H1 (cell line): ENCODE measurements at regions of chr1 and their contacts with region 1.

Region 1: DNA sequence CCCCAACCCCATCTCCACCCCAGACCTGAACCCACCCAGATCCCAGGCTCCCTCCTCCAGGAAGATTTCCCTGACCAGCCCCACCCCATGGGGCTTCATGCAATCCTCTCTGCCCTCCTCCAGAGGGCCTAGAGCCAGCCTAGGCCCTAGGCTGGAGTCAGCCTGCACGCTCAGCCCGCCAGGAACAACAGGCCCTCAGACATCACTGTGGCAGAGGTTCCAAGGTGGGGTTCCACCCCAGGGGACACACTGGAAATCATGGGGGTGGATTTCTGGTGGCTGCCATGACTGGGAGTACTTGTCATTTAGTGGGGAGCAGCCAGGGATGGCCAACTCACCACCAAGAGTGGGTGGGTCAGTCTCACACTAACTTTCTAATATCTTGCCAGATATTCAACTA is 122.0 kb downstream of the GLIS1 start:
- DNase-seq: no peak
- H3K4me3 ChIP-seq: no peak overlapping the region
- H3K27ac ChIP-seq: no peak overlapping the region
- H3K4me1 ChIP-seq: peaks cover 2 to 3% (median 3%) of the 10 kb centered on the region in 4 experiments; a peak in 5 of 7 replicates
- H3K27me3 ChIP-seq: no peaks in the 10 kb centered on the region
- CTCF ChIP-seq: peak; percentile 49 to 63 (median 60)
- EP300 ChIP-seq: no peak
- POLR2A ChIP-seq: no peak
- RAD21 ChIP-seq: peak; percentile 38 to 69

Region 2: DNA sequence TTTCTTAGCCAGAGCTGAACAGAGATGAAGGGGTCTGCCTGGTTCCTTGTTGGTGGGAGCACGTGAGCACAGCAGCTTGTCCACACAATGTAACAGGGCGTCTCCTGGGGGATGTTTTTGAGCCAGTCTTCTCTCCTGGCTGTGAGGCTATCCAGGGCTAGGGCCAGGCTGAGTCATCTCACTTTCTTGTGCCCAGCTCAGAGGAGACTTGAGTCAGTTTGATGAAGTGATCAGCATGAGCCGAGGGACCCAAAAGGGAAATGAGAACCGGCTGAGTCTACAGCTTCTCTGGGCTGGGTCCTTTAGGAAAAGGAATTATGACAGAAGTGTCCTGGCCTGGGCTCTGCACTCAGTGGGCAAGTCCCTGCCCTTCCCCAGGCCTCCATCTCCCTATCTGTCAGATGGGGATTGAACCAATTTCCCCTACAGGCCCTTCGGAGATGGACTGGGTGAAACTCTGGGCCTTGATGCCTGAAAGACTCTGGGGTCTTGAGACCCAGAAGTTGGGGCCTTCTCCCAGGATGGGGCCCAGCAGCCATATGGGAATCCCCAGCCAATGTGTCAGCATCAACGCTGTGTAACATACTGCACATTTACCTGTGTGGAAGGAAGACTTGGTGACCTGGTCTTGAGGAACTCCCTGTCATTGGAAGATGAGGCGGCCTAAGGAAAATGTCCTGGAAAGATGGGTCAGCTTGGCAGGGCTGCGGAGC is 121.1 kb before region 1 on chr1:
- CTCF ChIA-PET with region 1: no interaction called
- POLR2A ChIA-PET with region 1: no interaction called
- DNase-seq: no peak
- H3K4me3 ChIP-seq: no peak overlapping the region
- H3K27ac ChIP-seq: no peak overlapping the region
- H3K4me1 ChIP-seq: no peaks in the 10 kb centered on the region; a peak in 1 of 7 replicates
- H3K27me3 ChIP-seq: no peaks in the 10 kb centered on the region; a peak in 1 of 7 replicates
- CTCF ChIP-seq: no peak
- EP300 ChIP-seq: no peak
- POLR2A ChIP-seq: no peak
- RAD21 ChIP-seq: no peak

Region 3: DNA sequence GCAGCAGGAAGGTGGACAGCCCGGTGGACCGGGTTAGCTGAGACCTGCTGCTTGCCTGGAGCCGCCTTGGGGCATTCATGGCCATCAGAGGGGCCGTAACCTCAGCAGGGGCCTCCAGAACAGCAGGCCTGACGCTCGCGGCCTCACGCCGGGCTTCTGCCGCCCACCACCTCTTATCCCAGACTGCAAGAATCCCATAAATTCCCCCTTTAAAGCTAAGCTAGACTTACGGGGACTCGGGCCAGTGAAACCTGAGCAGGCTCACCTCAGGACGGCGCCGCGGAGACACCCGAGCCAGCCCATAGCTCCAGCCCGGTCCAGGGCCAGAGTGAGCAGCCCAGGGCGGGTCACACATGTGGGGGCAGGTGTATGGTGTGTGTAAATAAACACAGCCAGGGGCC is 10.3 kb before region 1 on chr1:
- CTCF ChIA-PET with region 1: interaction called, 17 read pairs
- POLR2A ChIA-PET with region 1: interaction called, 4 read pairs
- DNase-seq: peak in 1 of 2 experiments; percentile 65
- H3K4me3 ChIP-seq: no peak overlapping the region
- H3K27ac ChIP-seq: no peak overlapping the region
- H3K4me1 ChIP-seq: peaks cover 0 to 6% (median 4%) of the 10 kb centered on the region in 4 experiments; a peak in 5 of 7 replicates
- H3K27me3 ChIP-seq: peaks cover 0 to 7% (median 0%) of the 10 kb centered on the region in 4 experiments; a peak in 3 of 7 replicates
- CTCF ChIP-seq: no peak
- EP300 ChIP-seq: no peak
- POLR2A ChIP-seq: no peak
- RAD21 ChIP-seq: no peak; a peak in 1 of 4 replicates

Region 4: GRCh38 chr1:53811414-53811851 is 194.5 kb after region 1 on chr1:
- CTCF ChIA-PET with region 1: no interaction called
- POLR2A ChIA-PET with region 1: no interaction called
- DNase-seq: peak; percentile 17 to 84
- H3K4me3 ChIP-seq: no peak overlapping the region
- H3K27ac ChIP-seq: no peak overlapping the region
- H3K4me1 ChIP-seq: no peaks in the 10 kb centered on the region; a peak in 1 of 7 replicates
- H3K27me3 ChIP-seq: no peaks in the 10 kb centered on the region
- CTCF ChIP-seq: peak; percentile 50 to 69 (median 52)
- EP300 ChIP-seq: no peak
- POLR2A ChIP-seq: 0 out of 3 replicates have a peak, but pooled peaks of 1 of the 2 experiments have one; percentile 26
- RAD21 ChIP-seq: peak in 1 of 2 experiments; percentile 27; a peak in 2 of 4 replicates